AG04449 (cell line): ENCODE measurements at regions of chr21 and their contacts with region 1.

Region 1: GRCh38 chr21:34526618-34527290 is 14.7 kb upstream of the KCNE1 start:
- DNase-seq: peak; percentile 100
- H3K4me3 ChIP-seq: peak overlapping the region; percentile 67
- CTCF ChIP-seq: no peak

Region 2: GRCh38 chr21:34157521-34157920 is 369.2 kb before region 1 on chr21:
- CTCF ChIA-PET with region 1: no interaction called
- POLR2A ChIA-PET with region 1: no interaction called
- DNase-seq: no peak
- H3K4me3 ChIP-seq: no peak overlapping the region
- CTCF ChIP-seq: no peak

Region 3: DNA sequence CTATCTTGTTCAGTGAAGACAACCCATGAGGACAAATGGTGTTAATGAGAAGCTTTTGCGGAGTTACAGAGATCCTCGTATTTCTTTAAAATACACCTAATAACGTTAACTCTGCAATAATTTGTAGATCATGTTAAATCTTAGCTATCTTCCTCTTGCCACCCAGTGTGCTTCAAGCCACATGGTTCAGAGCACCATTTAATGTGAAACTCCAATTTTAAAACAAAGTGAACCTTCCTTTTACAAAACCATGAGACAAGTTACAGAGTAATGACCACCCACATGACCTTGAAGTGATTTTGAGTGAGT is 164.7 kb before region 1 on chr21:
- CTCF ChIA-PET with region 1: no interaction called
- POLR2A ChIA-PET with region 1: no interaction called
- DNase-seq: no peak
- H3K4me3 ChIP-seq: no peak overlapping the region
- CTCF ChIP-seq: no peak

Region 4: GRCh38 chr21:34553151-34553952 is 26.6 kb after region 1 on chr21:
- CTCF ChIA-PET with region 1: interaction called, 3 read pairs
- POLR2A ChIA-PET with region 1: interaction called, 61 read pairs
- DNase-seq: no peak
- H3K4me3 ChIP-seq: peak overlapping the region; percentile 45
- CTCF ChIP-seq: no peak

Region 5: GRCh38 chr21:34576041-34576511 is 49.3 kb after region 1 on chr21:
- CTCF ChIA-PET with region 1: interaction called, 351 read pairs
- POLR2A ChIA-PET with region 1: interaction called, 18 read pairs
- DNase-seq: no peak
- H3K4me3 ChIP-seq: no peak overlapping the region
- CTCF ChIP-seq: no peak